ENCODE measurements at regions of chr2 and their contacts with region 1.

Region 1: DNA sequence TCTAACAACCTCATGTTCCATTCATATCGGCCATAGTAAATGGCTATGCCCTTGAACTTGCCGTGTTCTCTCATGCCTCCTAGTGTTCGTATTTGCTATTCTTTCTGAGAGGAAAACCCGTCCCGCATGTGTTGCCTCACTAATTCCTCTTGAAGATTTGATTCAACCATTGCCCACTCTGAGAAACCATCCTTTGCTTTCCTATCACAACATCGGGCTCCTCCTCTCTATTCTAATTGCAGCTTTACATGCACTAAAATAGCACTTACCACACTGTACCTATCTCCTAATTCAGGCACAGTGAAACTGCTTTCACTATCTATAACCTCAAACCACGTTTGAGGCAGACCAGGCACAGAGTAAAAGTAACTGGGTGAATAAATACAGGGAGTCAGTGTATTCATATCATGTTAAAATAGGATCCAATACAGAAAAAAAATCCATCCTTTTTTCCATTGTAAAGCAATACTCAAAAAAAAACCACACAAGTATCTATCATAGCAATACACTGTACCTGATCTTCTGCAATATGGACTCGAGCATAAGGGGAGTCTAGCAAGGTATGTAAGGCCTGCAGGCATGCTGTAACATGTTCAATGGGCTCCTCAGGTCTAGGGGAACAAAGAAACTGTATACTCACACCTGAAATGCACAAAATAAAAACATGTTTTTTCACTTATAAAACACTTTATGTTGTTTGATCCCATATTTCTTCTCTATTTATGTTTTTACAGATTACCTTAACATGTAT is 39.0 kb upstream of the STRN start:
- DNase-seq: peak in 1 of 2 donors; percentile 21
- ATAC-seq: peak; percentile 73 to 95 (median 89)
- H3K4me3 ChIP-seq: no peak overlapping the region
- H3K27ac ChIP-seq: peak overlapping the region in 8 of 10 donors; percentile 3 to 87 (median 66)
- H3K4me1 ChIP-seq: peaks cover 0 to 22% (median 0%) of the 10 kb centered on the region in 9 donors
- H3K27me3 ChIP-seq: no peaks in the 10 kb centered on the region
- CTCF ChIP-seq: peak in 8 of 9 donors; percentile 7 to 60 (median 51)

Region 2: GRCh38 chr2:36770542-36771287 is 234.6 kb before region 1 on chr2:
- intact Hi-C with region 1: loop called in 1 of 10 experiments (anchors 10 kb)
- DNase-seq: peak in 1 of 2 donors; percentile 20
- ATAC-seq: peak in 3 of 8 donors; percentile 37 to 46 (median 37)
- H3K4me3 ChIP-seq: no peak overlapping the region
- H3K27ac ChIP-seq: no peak overlapping the region
- H3K4me1 ChIP-seq: no peaks in the 10 kb centered on the region
- H3K27me3 ChIP-seq: no peaks in the 10 kb centered on the region
- CTCF ChIP-seq: peak in 7 of 9 donors; percentile 32 to 66 (median 41)

Region 3: DNA sequence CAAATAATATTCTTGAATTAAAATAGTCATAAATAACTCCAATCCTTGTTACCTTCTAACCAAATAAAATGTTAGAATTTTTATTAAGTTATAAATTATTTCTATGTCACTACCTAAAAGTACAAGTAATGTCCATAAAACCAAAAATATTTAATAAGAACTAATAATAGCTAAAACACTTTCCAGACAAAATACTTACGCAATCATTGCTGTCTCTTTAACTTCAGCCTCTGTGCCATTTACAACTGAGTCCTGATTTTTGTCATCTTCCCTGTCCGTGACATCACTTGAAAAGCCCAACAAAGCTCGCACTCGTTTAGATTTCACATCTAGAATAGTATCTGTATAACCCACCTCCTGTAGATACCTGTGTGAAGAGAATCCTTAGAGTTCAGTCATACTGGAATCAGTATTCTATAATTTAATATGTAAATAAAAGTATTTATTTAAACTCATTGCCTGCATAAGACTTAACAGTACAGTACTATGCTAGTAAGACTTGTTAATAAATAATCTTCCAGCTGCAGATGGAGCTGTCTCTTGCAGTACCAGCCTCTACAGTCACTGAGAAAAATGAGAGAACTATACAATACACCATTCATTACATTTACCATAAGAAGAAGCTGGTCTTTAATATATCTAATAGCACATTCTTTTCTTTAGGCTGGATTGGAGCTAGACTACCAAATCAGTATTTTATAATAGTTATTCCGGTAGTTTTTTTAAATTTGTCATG is 102.7 kb before region 1 on chr2:
- intact Hi-C with region 1: loop called in 1 of 10 experiments (anchors 10 kb)
- DNase-seq: no peak
- ATAC-seq: peak in 4 of 8 donors; percentile 55 to 78 (median 67)
- H3K4me3 ChIP-seq: no peak overlapping the region
- H3K27ac ChIP-seq: peak overlapping the region in 2 of 10 donors; percentile 8 to 10
- H3K4me1 ChIP-seq: peaks cover 0 to 6% (median 0%) of the 10 kb centered on the region in 9 donors
- H3K27me3 ChIP-seq: no peaks in the 10 kb centered on the region
- CTCF ChIP-seq: no peak